ENCODE measurements at regions of chr10 and their contacts with region 1.

Region 1: DNA sequence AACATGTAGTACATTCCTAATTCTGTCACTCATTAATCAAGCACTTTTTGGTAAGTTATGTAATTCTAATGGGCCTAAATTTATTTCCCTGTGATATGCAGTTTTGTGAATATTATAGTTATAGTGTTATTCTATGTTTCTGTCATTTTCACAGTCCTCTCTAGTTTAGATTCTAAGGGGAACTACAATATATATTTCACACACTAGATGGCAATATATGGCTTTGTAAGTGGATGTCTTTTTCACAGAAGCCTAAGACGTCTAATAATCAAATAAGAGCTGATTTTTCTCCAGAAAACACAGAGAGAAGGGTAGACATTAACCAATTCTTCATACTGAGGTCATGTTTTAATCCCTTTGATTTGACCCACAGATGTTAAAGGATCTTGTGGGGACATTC is 18.0 kb downstream of the RNLS start:
- DNase-seq: no peak
- ATAC-seq: no peak
- H3K4me3 Mint-ChIP-seq: no peak overlapping the region
- H3K27ac Mint-ChIP-seq: no peak overlapping the region
- H3K4me1 Mint-ChIP-seq: peaks cover 3% of the 10 kb centered on the region
- H3K27me3 Mint-ChIP-seq: no peaks in the 10 kb centered on the region
- CTCF ChIP-seq: peak; percentile 53

Region 2: GRCh38 chr10:88293073-88293472 is 272.0 kb before region 1 on chr10:
- CTCF ChIA-PET with region 1: no interaction called
- POLR2A ChIA-PET with region 1: no interaction called
- intact Hi-C with region 1: no loop called
- DNase-seq: no peak
- ATAC-seq: no peak
- H3K4me3 Mint-ChIP-seq: no peak overlapping the region
- H3K27ac Mint-ChIP-seq: no peak overlapping the region
- H3K4me1 Mint-ChIP-seq: peaks cover 18% of the 10 kb centered on the region
- H3K27me3 Mint-ChIP-seq: no peaks in the 10 kb centered on the region
- CTCF ChIP-seq: no peak

Region 3: DNA sequence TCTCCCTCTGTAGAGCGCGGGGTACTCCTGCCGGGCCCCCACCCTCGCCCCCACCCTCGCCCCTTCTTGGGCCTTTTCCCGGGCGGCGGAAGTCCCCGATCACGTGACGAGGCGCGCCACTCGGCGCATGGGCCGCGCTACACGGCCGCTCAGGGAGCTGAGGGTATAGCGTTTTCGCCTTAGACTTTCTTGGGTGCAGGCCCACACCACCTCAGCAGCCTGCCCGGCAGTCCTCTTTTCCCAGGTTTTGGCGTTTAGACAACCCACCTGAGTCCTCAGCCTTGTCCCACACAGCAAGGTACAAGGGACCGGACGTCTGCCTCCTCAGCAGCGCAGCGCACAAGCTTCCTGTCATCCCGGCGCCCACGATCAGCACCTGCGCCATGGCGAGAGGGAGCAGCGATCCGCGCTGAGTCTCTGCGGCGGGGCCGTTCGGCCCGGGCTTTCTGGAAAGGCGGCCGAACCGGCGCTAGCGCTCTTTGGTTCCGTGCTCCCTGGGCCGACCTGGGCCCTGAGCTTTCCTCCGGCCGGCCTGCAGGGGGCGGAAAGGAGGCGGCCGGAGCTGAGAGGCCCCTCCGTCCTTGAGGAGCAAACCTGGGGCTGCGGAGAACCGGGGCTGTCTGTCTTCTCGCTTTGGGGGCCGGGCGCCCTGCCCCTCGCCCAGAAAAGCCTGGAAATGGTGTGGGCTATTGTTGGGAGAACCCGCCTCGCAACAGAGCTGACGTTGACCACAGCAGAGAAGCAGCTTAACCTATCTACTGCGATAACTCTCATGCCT is 17.9 kb after region 1 on chr10 and contains the start of gene RNLS:
- CTCF ChIA-PET with region 1: interaction called, 15 read pairs
- POLR2A ChIA-PET with region 1: no interaction called
- intact Hi-C with region 1: no loop called
- DNase-seq: peak; percentile 74
- ATAC-seq: peak; percentile 90
- H3K4me3 Mint-ChIP-seq: peak within 1 kb of the TSS; percentile 81
- H3K27ac Mint-ChIP-seq: peak within 1 kb of the TSS; percentile 90
- H3K4me1 Mint-ChIP-seq: peaks cover 11% of the 10 kb centered on the region
- H3K27me3 Mint-ChIP-seq: no peaks in the 10 kb centered on the region
- CTCF ChIP-seq: peak; percentile 80
- total RNA-seq, gene RNLS: 4.5 TPM

Region 4: DNA sequence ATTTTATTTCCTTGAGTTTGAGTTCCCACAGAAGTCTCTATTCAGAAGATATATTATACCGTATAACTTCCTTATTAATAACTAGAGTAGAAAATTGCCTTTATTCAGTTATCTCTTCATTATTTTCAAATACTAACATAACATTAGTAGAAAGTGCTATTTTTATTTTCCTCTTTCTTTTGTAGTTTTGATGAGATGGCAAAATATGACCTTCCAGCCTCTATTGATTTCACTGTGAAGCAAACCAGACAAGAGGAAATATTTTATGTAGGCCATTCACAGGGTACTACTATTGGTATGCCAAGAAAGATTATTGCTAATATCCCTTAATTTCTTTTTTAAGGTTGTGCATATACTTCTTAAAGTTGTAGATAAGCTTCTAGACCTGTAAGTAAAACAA is 29.4 kb after region 1 on chr10:
- CTCF ChIA-PET with region 1: no interaction called
- POLR2A ChIA-PET with region 1: no interaction called
- intact Hi-C with region 1: no loop called
- DNase-seq: no peak
- ATAC-seq: no peak
- H3K4me3 Mint-ChIP-seq: no peak overlapping the region
- H3K27ac Mint-ChIP-seq: no peak overlapping the region
- H3K4me1 Mint-ChIP-seq: peaks cover 9% of the 10 kb centered on the region
- H3K27me3 Mint-ChIP-seq: peaks cover 6% of the 10 kb centered on the region
- CTCF ChIP-seq: no peak